Dorsolateral prefrontal cortex (tissue), 120 donors: ENCODE measurements at regions of chr9 and their contacts with region 1.

Region 1: DNA sequence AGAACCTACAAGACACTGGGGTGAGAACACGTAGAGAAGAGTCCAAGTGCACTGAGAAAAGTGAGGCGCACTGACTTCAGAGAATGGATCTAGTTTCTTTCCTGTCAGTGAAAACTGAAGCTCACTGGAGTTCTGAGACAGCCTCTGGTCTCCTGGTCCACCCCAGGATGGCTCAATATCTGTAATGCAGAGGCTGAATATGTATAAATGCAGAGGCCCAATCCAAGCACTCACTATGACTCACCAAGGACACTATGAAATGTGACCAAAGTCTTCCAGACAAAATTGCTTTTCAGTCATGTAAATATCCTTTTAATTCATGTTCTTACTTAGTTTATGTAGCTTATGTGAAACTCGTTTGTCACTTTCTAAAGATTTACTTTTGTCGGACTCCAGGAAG is 53.8 kb downstream of the NFIB start:
- DNase-seq: no peak
- H3K4me3 ChIP-seq: no peak overlapping the region
- H3K27ac ChIP-seq: no peak overlapping the region
- H3K27me3 ChIP-seq: no peaks in the 10 kb centered on the region
- CTCF ChIP-seq: no peak

Region 2: GRCh38 chr9:14302405-14302804 is 42.3 kb after region 1 on chr9:
- intact Hi-C with region 1: loop called (anchors 5 to 10 kb)
- DNase-seq: no peak
- H3K4me3 ChIP-seq: peak overlapping the region in 16 of 59 donors; percentile 1 to 92 (median 80)
- H3K27ac ChIP-seq: peak overlapping the region in 52 of 59 donors; percentile 32 to 98 (median 92)
- H3K27me3 ChIP-seq: no peaks in the 10 kb centered on the region
- CTCF ChIP-seq: peak in 1 of 56 donors; percentile 8